ENCODE measurements at regions of chr10 and their contacts with region 1.

Region 1: GRCh38 chr10:79608505-79609375 is 2.0 kb upstream of the SFTPA1 start:
- DNase-seq: peak; percentile 52 to 73
- H3K4me3 ChIP-seq: no peak overlapping the region
- H3K4me3 Mint-ChIP-seq: no peak overlapping the region
- H3K27ac Mint-ChIP-seq: no peak overlapping the region
- H3K4me1 ChIP-seq: no peaks in the 10 kb centered on the region
- H3K4me1 Mint-ChIP-seq: no peaks in the 10 kb centered on the region
- H3K27me3 ChIP-seq: no peaks in the 10 kb centered on the region; the same call in 1 of the 2 replicates
- H3K27me3 Mint-ChIP-seq: peaks cover 24% of the 10 kb centered on the region
- CTCF ChIP-seq: peak; percentile 91 to 96

Region 2: DNA sequence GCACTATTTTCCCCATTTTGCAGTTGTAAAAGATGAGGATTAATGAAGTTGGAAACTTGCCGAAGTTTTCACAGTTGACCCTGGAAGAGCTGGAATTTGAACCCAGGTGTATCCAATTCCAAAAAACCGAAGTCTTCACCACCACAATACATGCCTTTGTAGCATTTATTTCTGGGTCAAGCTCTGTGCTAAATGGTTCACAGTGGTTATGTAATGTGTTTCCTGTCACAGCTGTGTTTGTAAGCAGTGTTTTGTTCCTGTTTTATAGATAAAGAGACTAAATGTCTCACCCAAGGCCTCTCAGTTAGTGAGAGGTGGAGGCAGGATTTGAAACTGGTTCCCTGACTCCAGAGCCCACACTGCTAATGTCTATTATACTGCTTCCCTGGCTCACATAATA is 66.1 kb before region 1 on chr10:
- CTCF ChIA-PET with region 1: no interaction called
- POLR2A ChIA-PET with region 1: no interaction called
- intact Hi-C with region 1: loop called (anchors 1 kb)
- DNase-seq: no peak
- H3K4me3 ChIP-seq: no peak overlapping the region
- H3K4me3 Mint-ChIP-seq: no peak overlapping the region
- H3K27ac Mint-ChIP-seq: no peak overlapping the region
- H3K4me1 ChIP-seq: no peaks in the 10 kb centered on the region
- H3K4me1 Mint-ChIP-seq: peaks cover 9% of the 10 kb centered on the region
- H3K27me3 ChIP-seq: no peaks in the 10 kb centered on the region
- H3K27me3 Mint-ChIP-seq: no peaks in the 10 kb centered on the region
- CTCF ChIP-seq: no peak

Region 3: DNA sequence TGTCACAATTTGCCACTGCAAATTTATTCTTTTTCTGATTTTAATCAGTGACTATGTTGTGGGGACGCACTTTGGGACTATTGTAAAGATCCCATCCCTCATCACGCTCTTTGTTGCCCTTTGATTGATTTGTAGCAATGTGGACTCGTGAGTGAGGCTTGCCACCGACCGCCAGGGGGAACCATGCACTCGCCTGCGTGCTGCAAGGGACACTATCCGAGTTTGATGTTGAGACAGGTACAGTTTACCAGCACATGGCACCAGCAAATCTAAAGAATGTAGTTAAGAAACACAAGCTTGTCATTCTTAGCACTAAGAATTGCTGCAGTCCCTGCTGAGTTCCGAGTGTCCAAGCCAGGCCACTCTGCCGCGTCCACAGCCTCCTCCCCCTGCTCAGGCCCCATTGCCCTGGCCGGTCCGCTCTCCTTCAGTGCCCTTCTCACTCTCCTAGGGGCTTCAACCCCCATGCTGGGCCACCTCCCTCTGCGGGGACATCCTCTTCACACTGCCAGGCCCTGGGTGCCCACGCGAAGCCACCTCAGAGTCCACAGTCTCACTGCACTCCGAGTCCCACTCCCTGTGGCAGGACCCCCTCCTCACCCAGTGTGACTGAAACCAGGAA is 46.5 kb before region 1 on chr10:
- CTCF ChIA-PET with region 1: no interaction called
- POLR2A ChIA-PET with region 1: no interaction called
- intact Hi-C with region 1: loop called (anchors 1 kb)
- DNase-seq: peak; percentile 71 to 80
- H3K4me3 ChIP-seq: no peak overlapping the region
- H3K4me3 Mint-ChIP-seq: no peak overlapping the region
- H3K27ac Mint-ChIP-seq: no peak overlapping the region
- H3K4me1 ChIP-seq: no peaks in the 10 kb centered on the region
- H3K4me1 Mint-ChIP-seq: peaks cover 6% of the 10 kb centered on the region
- H3K27me3 ChIP-seq: no peaks in the 10 kb centered on the region
- H3K27me3 Mint-ChIP-seq: peaks cover 18% of the 10 kb centered on the region
- CTCF ChIP-seq: peak; percentile 86 to 96